Left ventricle myocardium superior (tissue), 1 donor: ENCODE measurements at regions of chr3 and their contacts with region 1.

Region 1: GRCh38 chr3:153284282-153284938 is 122.4 kb downstream of the RAP2B start:
- DNase-seq: no peak
- ATAC-seq: peak; percentile 86

Region 2: GRCh38 chr3:153161138-153161713 is 123.2 kb before region 1 on chr3:
- intact Hi-C with region 1: loop called (anchors 10 kb)
- DNase-seq: peak; percentile 91
- ATAC-seq: peak; percentile 91

Region 3: DNA sequence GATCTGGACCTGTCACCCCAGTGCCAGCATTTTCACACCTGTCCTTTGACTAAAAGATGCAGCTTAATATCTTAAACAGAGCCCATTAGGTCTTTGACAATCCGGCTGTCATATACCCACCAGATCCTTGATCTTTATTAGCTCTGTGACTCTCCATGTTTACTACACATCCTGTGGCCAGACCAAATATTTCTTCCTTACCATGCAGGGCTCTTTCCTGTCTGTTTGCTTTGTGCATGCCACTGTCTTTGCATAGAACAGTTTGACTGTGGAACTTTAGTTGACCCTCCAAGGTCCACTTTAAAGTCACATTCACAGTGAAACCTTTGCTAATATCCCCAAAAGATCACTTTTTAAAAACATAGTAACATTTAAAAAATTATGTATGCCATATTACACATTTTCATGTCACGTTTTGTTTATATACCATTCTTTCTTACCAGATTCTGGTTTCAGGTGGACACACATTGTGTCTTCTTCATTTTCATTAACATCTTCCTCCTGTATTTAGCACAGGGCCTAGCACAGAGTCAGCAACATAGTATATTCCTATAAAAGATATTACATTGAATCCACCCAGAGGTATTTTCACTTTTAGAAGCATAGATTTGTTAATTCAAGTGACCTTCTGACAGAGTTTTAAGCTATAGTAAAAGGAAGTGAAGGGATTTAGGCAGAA is 26.6 kb before region 1 on chr3:
- intact Hi-C with region 1: no loop called
- DNase-seq: no peak
- ATAC-seq: no peak